Activated naive CD4-positive, alpha-beta T cell treated with anti-CD3 and anti-CD28 coated beads for 36 hours (primary cell): ENCODE measurements at regions of chr6 and their contacts with region 1.

Region 1: DNA sequence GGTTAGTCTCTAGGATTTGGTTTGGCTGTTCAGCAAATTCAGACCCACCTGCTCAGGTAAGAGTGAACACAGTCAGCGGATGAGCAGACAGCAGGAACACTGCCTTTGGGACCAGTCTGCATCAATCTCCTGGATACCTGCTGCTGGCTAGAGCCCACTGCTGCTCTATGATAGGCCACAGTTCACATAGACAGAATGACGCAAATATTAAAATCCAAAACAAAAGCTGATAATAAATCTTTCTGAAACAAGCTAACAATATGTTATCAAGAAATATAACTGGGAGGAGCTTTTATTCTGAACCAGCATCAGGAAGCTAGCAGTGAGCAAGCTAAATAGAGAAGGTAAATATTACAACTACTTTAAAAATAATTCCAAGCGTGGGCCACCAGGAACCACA is at the start of gene TAAR1:
- DNase-seq: no peak
- H3K4me3 Mint-ChIP-seq: no peak within 1 kb of the TSS
- H3K27ac Mint-ChIP-seq: no peak within 1 kb of the TSS
- H3K4me1 Mint-ChIP-seq: no peaks in the 10 kb centered on the region
- H3K27me3 Mint-ChIP-seq: no peaks in the 10 kb centered on the region
- total RNA-seq, gene TAAR1: not detected

Region 2: GRCh38 chr6:132520953-132521352 is 138.1 kb before region 1 on chr6:
- CTCF ChIA-PET with region 1: no interaction called
- intact Hi-C with region 1: loop called (anchors 5 kb)
- DNase-seq: no peak
- H3K4me3 Mint-ChIP-seq: no peak overlapping the region
- H3K27ac Mint-ChIP-seq: no peak overlapping the region
- H3K4me1 Mint-ChIP-seq: no peaks in the 10 kb centered on the region
- H3K27me3 Mint-ChIP-seq: peaks cover 12% of the 10 kb centered on the region